Right ventricle myocardium inferior (tissue), 1 donor: ENCODE measurements at regions of chr9 and their contacts with region 1.

Region 1: DNA sequence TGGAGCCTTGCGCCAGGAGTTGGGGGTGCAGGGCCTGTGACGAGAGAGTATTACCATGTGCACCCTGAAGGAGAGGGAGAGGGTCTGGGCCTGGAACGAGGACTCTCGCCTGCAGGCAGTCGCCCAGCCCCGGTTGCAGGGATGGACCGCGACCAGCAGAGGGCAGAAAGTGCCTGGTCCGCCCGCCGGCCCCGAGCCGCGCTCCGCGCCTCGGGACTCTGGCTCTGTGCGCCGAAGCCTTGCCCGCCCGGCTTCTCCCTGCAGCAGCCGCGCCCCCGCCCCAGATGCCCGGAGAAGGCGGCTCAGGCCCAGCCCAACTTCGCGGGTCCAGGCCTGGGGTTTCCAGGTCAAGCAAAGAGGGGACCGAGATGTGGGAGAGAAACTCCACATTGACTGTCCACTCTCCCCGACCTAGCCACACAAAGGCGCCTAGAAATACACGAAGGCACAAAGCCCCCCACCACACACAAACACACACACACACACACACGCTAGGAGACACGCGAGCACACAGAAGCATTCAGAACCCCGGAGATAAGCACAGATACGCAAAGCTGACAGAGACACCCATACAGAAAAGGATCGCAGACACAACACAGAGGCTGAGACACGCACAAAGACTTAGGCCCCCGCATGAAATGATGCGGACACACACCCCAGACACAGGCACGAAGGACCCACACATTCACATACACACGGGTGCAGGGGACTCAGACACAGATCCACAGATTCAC is 2.0 kb upstream of the LMX1B start:
- DNase-seq: peak; percentile 88
- ATAC-seq: peak; percentile 84

Region 2: DNA sequence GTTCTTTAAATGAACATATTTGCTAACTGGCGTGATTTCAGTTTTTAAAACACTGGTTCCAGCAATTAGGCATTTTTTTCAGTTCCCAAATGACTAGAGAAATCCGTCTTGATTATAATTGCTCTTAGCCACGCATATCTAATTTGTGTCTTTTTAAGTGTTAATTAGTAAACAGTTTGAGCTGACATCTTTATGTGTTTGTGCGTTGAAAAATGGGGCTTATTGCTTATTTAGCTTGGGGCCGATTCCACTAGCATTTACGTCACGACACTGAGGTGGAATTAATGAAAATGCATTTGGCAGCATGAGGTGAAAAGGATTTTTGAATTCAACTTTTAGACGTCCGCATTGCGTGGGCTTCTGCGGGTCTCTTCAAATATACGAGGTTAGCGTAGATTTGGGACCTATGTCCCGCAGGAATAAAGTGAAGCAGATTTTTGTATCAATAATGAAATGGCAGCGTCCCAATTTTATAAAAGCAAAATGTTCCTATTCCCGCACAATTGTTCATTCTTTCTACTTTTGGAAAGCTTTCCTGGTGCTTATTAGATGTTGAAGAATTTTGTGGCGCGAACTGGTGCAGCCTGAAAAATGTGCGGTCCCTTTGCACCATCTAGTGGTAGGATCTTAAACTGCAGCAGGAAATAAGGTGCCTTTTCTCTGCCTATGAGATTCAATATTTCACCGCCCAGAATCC is 120.7 kb before region 1 on chr9:
- intact Hi-C with region 1: no loop called
- DNase-seq: no peak
- ATAC-seq: peak; percentile 61

Region 3: GRCh38 chr9:126690431-126691350 is 78.9 kb after region 1 on chr9:
- intact Hi-C with region 1: loop called (anchors 2 kb)
- DNase-seq: no peak
- ATAC-seq: peak; percentile 64

Region 4: GRCh38 chr9:127611899-127612790 is 1000.4 kb after region 1 on chr9 and contains the start of gene STXBP1:
- intact Hi-C with region 1: no loop called
- DNase-seq: peak; percentile 93
- ATAC-seq: peak; percentile 85
- total RNA-seq, gene STXBP1: 51.5 TPM